ENCODE measurements at regions of chr12 and their contacts with region 1.

Region 1: DNA sequence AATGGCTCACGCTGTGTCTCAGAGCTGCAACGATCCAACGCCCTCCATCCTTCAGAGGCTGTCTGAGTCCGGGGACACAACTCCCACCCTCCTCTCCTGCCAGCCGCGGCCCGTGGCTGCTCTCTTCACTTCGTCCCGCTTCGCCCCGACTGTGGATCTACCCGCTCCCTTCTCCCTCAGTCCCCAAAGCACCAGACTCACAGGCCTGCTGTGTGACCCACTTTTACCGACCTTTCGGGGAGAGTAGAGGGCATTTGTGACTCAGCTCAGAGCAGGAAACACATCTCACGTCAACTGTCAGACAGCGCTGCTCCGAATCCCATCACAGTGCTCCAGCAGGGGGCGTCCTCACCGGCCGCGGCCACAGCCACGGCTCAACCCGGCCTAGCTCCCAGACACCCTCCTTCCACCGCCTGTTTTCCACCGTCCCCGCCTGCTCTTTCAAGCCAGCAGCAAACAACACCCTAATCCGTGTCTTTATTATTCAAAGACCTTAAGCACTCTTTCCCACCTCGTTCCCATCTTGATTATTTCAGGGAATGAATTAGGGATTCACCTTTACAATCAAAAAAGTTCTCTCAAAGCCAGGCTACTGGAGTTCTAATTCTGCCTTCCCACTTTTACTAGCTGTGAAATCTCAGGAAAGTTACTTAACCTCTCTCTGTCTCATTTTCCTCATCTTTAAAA is 5.0 kb upstream of the AQP2 start:
- DNase-seq: peak; percentile 9
- H3K4me3 ChIP-seq: no peak overlapping the region
- H3K27me3 ChIP-seq: peaks cover 5% of the 10 kb centered on the region
- CTCF ChIP-seq: peak; percentile 93

Region 2: DNA sequence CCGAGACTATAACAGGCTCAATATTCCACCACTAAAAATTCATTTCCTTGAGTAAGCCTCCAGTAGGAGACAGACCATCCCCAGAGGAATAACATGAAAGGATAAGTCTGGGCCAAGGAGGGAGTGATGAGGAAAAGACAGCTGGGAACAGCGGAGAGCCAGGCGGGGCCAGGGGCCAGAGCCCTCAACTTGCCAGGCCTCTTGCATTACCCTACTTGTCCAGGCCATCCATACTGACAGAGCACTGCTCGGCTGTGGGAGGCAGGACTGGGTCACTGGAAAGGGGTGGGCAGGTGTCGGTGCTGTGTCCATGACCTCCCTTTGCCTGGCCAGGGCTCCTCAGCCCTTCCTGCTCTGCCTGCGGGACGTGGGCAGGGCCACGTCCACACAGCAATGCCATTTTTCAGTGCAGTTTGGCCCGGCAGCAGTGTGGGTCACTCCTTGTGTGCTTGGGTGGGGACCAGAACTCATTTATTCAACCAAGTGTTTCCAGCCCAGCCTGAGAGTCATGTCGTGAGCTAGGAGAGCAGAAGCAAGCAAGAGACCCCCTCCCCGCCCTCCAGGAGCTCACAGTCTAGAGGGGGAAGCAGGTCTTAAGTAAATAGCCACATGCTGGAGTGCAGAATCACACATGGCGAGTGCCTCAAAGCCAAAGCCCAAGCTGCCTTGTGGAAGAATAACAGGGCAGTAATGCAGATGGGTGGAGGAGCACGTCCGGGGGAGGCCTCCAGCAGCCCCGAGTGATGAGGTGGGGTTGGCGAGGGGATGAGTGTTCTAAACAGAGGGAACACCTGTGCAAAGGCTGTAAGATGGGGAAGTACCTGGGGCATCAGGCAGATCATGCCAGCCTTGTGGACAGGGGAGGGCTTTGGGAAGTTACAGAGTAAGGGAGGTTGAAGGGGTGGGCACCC is 32.9 kb before region 1 on chr12:
- CTCF ChIA-PET with region 1: interaction called, 10 read pairs
- POLR2A ChIA-PET with region 1: no interaction called
- DNase-seq: no peak
- H3K4me3 ChIP-seq: no peak overlapping the region
- H3K27me3 ChIP-seq: no peaks in the 10 kb centered on the region; the same call in 1 of the 2 replicates
- CTCF ChIP-seq: no peak

Region 3: GRCh38 chr12:49930515-49931288 is 14.8 kb before region 1 on chr12:
- CTCF ChIA-PET with region 1: interaction called, 51 read pairs
- POLR2A ChIA-PET with region 1: interaction called, 4 read pairs
- DNase-seq: peak; percentile 20
- H3K4me3 ChIP-seq: no peak overlapping the region
- H3K27me3 ChIP-seq: peaks cover 2% of the 10 kb centered on the region; the same call in 1 of the 2 replicates
- CTCF ChIP-seq: no peak

Region 4: DNA sequence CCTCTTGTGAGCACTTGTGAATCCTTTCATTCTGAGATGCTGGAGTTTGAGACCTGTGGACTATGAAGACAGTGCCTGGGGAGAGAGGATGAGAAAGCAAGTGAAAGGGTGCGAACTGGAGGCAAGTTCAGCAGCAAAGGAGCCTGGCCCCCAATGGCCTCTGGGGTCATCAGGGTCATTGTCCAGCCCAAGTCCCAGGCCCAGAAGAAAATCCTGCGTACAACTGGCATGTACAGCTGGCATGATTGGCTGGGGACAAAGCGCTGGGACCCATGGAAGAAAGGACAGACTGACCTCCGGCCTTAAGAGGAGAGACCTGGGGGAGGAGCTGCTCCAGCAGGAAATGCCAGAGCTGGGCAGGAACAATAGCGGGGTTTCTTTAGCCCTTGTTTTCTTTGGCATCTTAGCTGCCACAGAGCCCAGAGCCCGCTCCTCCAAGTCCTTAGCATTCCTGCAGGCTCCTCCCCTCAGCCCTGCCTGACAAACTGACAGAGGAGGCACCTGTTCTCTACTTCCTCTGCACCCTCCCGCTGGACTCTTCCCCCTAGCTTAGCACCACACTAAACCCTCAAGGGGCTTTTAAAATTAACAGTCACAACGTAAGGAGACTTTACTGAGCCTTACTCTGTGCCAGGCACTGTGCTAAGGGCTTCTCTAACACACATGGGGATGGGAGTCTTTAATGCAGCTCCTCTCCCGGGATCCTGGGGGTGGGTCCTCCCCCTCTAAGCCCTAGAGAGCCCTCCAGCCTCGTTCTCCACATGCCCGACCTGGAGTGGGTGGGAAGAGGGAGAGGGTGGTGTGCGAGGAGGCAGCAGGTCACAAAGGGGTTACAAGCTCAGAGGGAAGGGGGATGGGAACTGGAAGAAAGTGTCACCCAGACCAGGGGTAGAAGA is 14.3 kb after region 1 on chr12:
- CTCF ChIA-PET with region 1: interaction called, 29 read pairs
- POLR2A ChIA-PET with region 1: no interaction called
- DNase-seq: no peak
- H3K4me3 ChIP-seq: no peak overlapping the region
- H3K27me3 ChIP-seq: peaks cover 54% of the 10 kb centered on the region
- CTCF ChIP-seq: no peak

Measured in BJ (cell line).